ENCODE measurements at regions of chr19 and their contacts with region 1.

Region 1: GRCh38 chr19:19021115-19021514 is 12.2 kb downstream of the SUGP2 start:
- DNase-seq: peak; percentile 84
- ATAC-seq: peak; percentile 96
- H3K4me3 ChIP-seq: no peak overlapping the region; the same call in 1 of the 2 replicates
- H3K27ac ChIP-seq: peak overlapping the region; percentile 60
- H3K4me1 ChIP-seq: peaks cover 3% of the 10 kb centered on the region
- H3K27me3 ChIP-seq: no peaks in the 10 kb centered on the region
- CTCF ChIP-seq: no peak
- POLR2A ChIP-seq: no peak
- RAD21 ChIP-seq: no peak

Region 2: GRCh38 chr19:18649371-18650020 is 371.6 kb before region 1 on chr19:
- CTCF ChIA-PET with region 1: no interaction called
- POLR2A ChIA-PET with region 1: no interaction called
- dilution Hi-C with region 1: no loop called
- in situ Hi-C with region 1: no loop called
- intact Hi-C with region 1: no loop called
- DNase-seq: peak; percentile 70
- ATAC-seq: peak; percentile 54
- H3K4me3 ChIP-seq: no peak overlapping the region
- H3K27ac ChIP-seq: peak overlapping the region; percentile 71
- H3K4me1 ChIP-seq: peaks cover 37% of the 10 kb centered on the region
- H3K27me3 ChIP-seq: no peaks in the 10 kb centered on the region
- CTCF ChIP-seq: no peak
- POLR2A ChIP-seq: 0 out of 2 replicates have a peak, but pooled peaks have one; percentile 14
- RAD21 ChIP-seq: no peak

Region 3: DNA sequence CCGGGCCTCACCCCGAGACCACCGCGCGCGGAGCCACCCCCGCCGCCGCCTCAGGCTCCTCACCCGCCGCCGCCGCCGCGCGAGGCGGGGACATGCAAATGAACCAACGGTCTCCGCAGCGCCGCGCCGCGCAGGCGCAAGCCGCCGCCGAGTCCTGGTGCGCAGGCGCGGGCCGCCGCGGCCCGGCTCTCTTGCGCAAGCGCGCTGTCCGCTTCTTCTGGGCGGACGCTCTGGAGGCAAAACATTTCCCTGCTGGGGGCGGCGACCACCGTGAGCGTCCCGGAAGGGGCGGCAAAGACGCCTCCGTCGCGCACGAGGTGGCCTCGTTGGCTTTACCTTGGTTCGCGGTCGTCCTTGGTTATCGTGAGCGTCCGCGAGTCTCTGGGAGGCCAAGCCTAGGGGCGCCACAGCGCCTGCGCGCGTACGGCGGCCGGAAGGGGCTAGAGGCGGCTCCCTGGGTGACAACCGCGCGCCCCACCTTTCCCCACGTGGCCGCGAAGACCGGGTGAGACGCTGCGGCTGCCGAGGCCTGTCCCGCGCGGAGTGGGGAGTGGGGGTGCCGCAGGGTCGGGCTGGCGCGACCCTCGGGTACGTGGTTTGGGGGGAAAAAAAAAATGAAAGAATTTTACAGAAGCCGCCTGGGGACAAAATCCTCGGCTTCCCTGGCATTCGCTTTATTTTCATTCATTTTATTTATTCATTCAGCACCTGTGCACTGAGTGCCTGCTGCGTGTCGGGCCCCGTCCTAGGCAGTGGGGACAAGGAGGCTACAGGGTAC is 12.5 kb after region 1 on chr19 and contains the starts of genes ARMC6 and SUGP2:
- CTCF ChIA-PET with region 1: no interaction called
- POLR2A ChIA-PET with region 1: interaction called, 13 read pairs
- dilution Hi-C with region 1: no loop called
- in situ Hi-C with region 1: no loop called
- intact Hi-C with region 1: no loop called
- DNase-seq: peak; percentile 84
- ATAC-seq: peak; percentile 81
- H3K4me3 ChIP-seq: peak within 1 kb of the TSS; percentile 70
- H3K27ac ChIP-seq: peak within 1 kb of the TSS; percentile 94
- H3K4me1 ChIP-seq: peaks cover 6% of the 10 kb centered on the region
- H3K27me3 ChIP-seq: no peaks in the 10 kb centered on the region
- CTCF ChIP-seq: no peak
- POLR2A ChIP-seq: peak; percentile 81
- RAD21 ChIP-seq: no peak
- total RNA-seq, gene ARMC6: 46.7 and 52.7 TPM in 2 replicates
- total RNA-seq, gene SUGP2: 23.3 and 25.8 TPM in 2 replicates